ENCODE measurements at regions of chr4 and their contacts with region 1.

Region 1: DNA sequence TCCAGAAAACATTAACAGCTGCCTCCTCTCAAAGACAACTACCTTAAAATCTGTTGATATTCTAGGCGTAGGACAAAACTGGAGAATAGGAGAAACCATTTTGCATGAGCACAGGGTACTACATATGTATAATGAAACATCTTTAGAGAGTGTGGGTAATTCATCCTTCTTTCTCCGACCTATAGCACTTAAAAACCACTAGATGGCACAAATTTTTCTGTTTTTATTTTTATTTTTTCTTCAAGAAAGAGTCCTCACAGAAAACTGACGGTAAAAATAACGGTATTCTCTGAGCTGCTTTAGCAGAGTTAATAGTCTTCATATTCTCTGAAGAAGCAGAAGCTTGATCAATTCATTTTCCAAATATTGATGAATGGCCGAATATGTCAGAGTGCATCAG is 14.6 kb downstream of the SMIM31 start:
- DNase-seq: no peak
- H3K4me3 ChIP-seq: no peak overlapping the region
- H3K27ac ChIP-seq: no peak overlapping the region
- H3K4me1 ChIP-seq: no peaks in the 10 kb centered on the region
- H3K27me3 ChIP-seq: no peaks in the 10 kb centered on the region
- CTCF ChIP-seq: peak in 1 of 2 donors; percentile 7
- POLR2A ChIP-seq: no peak

Region 2: DNA sequence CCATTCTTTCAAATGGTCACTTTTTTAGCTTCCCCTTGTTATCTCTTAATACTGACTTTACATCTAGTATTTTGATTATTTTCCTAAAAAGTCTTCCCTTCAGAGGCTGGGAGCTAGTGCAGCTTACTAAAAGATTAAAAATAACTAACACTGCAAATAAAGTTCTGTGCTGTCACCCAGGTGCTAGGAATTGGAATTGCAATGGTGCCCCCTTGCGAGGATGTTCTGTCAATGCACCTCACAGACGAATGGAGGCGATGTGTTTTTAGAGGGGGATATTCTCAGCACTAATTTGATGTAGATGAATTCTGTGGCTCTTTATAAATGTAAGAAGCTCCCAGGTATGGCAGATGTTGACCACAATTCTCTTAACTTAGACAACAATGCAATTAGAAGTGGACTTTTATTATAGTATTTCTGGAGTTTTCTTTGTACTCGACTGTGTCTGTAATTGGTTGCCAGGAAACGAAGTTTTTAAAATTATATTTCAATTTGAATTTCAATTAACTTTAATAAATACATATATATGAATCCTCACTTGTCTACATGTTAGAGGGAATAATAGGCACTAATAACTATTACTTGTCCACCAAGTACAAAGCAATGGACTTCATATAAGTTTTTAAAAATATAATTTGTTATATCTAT is 36.6 kb before region 1 on chr4:
- CTCF ChIA-PET with region 1: interaction called, 6 read pairs
- POLR2A ChIA-PET with region 1: no interaction called
- dilution Hi-C with region 1: no loop called
- intact Hi-C with region 1: loop called (anchors 1 kb)
- DNase-seq: peak; percentile 46
- H3K4me3 ChIP-seq: no peak overlapping the region
- H3K27ac ChIP-seq: no peak overlapping the region
- H3K4me1 ChIP-seq: no peaks in the 10 kb centered on the region
- H3K27me3 ChIP-seq: no peaks in the 10 kb centered on the region
- CTCF ChIP-seq: peak; percentile 73 to 74
- POLR2A ChIP-seq: no peak

Region 3: GRCh38 chr4:164779811-164780216 is 11.3 kb after region 1 on chr4:
- CTCF ChIA-PET with region 1: interaction called, 20 read pairs
- POLR2A ChIA-PET with region 1: no interaction called
- dilution Hi-C with region 1: no loop called
- intact Hi-C with region 1: no loop called
- DNase-seq: peak; percentile 26
- H3K4me3 ChIP-seq: no peak overlapping the region
- H3K27ac ChIP-seq: no peak overlapping the region
- H3K4me1 ChIP-seq: no peaks in the 10 kb centered on the region
- H3K27me3 ChIP-seq: no peaks in the 10 kb centered on the region
- CTCF ChIP-seq: peak; percentile 58 to 78
- POLR2A ChIP-seq: no peak

Region 4: DNA sequence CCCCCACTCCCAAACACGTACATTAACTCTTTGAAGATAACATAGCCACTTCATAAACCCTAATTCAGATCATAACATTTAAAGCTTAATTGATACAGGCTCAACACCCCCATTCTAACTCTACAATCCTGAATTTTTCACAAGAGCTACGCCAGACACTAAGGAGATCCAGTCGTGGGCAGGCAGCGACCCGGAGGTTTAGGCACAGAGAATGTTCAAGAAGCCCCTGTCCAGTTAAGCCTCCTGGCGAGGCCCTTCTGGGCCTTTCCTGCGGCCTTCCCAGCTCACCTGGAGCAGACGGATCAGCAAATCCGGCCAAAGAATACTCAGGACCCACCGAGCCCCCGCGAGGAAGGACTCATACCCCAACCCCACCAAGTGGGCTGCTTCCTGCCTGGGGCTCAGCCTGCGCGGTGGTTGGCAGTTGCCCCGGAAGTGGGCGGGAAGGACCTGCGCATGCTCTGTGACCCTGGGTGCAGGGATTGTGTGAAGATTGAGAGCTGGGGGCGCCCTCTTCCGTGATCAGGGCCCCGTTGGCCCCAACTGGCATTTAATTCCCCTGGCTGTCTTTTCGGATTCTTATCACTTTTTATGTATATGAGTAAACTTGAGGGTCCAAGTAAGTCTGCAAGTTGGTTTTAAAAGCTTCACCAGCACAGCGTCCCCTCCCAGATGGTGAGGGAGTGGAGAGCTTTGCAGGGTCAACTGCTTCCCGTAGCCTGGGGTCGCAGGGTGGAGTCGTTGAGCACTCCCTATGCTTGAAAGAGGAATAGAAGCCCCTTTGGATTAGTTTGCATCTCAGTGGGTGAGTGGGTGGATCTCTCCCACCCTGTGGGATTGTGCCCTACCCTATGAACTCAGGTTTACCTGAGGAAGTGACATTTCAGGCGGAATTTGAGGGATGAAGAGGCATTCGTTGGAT is 209.0 kb after region 1 on chr4 and contains the start of gene TRIM61:
- CTCF ChIA-PET with region 1: no interaction called
- POLR2A ChIA-PET with region 1: no interaction called
- dilution Hi-C with region 1: no loop called
- intact Hi-C with region 1: no loop called
- DNase-seq: no peak
- H3K4me3 ChIP-seq: no peak within 1 kb of the TSS
- H3K27ac ChIP-seq: no peak within 1 kb of the TSS
- H3K4me1 ChIP-seq: no peaks in the 10 kb centered on the region
- H3K27me3 ChIP-seq: no peaks in the 10 kb centered on the region
- CTCF ChIP-seq: no peak
- POLR2A ChIP-seq: no peak
- total RNA-seq, gene TRIM61: 0.22 TPM in 1 of 2 replicates, not detected in the other

Region 5: DNA sequence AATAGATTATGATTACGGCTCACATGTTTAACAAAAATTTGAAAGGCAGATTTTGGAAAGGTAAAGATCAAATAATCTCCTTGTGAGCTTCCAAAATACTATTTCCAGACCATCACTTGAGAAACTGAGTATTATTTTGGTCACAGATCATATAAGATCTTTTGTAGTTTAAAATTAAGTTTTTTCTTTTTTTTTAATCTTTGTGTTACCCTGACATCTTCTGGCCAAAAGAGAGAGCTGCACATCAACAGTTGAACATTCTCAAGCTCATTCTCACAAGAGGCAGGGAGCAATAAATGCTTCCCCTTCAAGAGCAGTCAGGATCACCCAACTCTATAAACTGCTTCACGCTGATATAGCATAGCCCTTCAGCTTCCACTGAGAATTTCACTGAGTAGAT is 328.3 kb after region 1 on chr4:
- CTCF ChIA-PET with region 1: interaction called, 89 read pairs
- POLR2A ChIA-PET with region 1: no interaction called
- dilution Hi-C with region 1: no loop called
- intact Hi-C with region 1: no loop called
- DNase-seq: peak; percentile 20
- H3K4me3 ChIP-seq: no peak overlapping the region
- H3K27ac ChIP-seq: no peak overlapping the region
- H3K4me1 ChIP-seq: no peaks in the 10 kb centered on the region
- H3K27me3 ChIP-seq: no peaks in the 10 kb centered on the region
- CTCF ChIP-seq: peak; percentile 28 to 37
- POLR2A ChIP-seq: no peak

Region 6: GRCh38 chr4:165378745-165379677 is 610.5 kb after region 1 on chr4 and contains the start of gene CPE:
- CTCF ChIA-PET with region 1: no interaction called
- POLR2A ChIA-PET with region 1: no interaction called
- dilution Hi-C with region 1: no loop called
- intact Hi-C with region 1: no loop called
- DNase-seq: peak; percentile 80
- H3K4me3 ChIP-seq: peak within 1 kb of the TSS; percentile 30 to 70 (median 49)
- H3K27ac ChIP-seq: no peak within 1 kb of the TSS
- H3K4me1 ChIP-seq: peaks cover 4% of the 10 kb centered on the region
- H3K27me3 ChIP-seq: peaks cover 2 to 4% of the 10 kb centered on the region in 2 experiments
- CTCF ChIP-seq: peak; percentile 37 to 89
- POLR2A ChIP-seq: no peak
- total RNA-seq, gene CPE: 8.1 and 9.2 TPM in 2 replicates

Measured in endothelial cell of umbilical vein (primary cell).